ENCODE measurements at regions of chr15 and their contacts with region 1.

Region 1: DNA sequence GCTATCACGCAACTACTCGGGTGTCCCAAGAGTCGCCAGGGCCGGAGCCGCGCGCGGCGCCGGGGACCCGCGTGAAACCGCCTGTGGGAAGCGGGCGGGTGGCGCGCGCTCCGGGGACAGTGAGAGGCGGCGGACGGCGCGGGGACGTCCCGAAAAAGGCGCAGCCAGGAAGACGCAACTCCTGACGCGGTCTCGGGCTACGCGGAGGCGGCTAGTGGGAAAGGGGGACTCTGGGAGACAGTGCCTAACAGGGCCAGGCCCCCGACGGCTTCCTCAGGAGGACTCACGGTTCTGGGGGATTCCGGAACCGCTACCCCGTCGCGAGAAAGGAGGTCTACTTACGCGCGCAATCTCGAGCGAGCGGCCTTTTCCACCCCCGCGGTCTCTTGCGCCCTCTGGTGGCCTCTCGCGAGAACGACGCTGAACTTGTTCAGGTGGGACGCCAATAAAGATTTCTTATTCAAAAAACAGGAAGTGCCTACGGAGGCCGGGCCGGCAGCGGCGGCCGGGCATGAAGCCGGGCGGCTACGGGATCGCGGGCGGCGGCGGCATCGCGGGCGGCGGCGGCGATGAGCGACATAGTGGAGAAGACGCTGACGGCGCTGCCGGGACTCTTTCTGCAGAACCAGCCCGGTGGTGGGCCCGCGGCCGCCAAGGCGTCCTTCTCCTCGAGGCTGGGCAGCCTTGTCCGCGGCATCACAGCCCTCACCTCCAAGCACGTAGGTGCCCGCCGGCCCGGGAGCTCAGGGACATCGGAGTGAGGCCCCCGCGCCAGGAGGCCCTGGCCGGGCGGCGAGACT is at the start of gene AP4E1:
- DNase-seq: peak; percentile 96
- ATAC-seq: peak; percentile 62
- H3K4me3 Mint-ChIP-seq: peak within 1 kb of the TSS; percentile 87
- H3K27ac Mint-ChIP-seq: peak within 1 kb of the TSS; percentile 97
- H3K4me1 Mint-ChIP-seq: peaks cover 24% of the 10 kb centered on the region
- H3K27me3 Mint-ChIP-seq: no peaks in the 10 kb centered on the region
- total RNA-seq, gene AP4E1: 9.0 to 13.1 TPM

Region 2: DNA sequence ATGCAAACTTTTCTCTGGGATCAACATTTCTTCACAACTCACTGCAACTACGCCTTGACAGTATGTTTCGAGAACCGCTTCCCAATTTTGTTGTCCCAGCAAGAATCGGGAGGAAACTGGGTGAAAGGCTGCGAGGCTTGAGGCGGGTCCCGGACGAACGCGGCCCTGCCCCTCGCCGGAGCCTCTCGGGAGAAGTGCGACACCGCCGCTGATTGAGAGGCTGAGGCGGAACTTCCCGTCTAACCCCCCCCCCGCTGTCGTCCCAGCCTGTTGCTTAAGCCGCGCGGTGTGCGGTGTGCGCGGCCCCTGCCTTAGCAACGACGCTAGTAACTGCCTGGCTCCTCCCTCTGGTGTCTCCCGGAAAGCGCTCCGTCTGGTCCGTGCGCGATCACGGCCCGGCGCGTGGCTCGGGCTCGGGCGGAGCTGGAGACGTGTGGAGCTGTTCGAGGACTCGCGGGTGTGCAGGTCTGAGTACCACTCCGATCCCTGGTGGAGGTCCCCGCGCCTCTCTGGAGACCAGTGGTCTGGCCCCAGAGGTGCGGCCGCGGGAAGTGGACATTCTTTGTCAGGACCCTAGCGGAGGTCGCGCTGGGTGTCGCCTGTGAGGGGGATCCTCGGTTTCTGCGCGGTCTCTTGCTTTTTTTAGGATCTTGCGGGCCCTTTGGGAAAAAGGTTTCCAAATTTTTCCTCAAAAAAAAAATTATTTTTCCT is 1287.6 kb before region 1 on chr15 and contains the starts of genes DTWD1 and FAM227B:
- CTCF ChIA-PET with region 1: no interaction called
- POLR2A ChIA-PET with region 1: no interaction called
- intact Hi-C with region 1: loop called in 1 of 2 experiments (anchors 5 kb)
- DNase-seq: peak; percentile 96
- ATAC-seq: peak; percentile 98
- H3K4me3 Mint-ChIP-seq: peak within 1 kb of the TSS; percentile 86
- H3K27ac Mint-ChIP-seq: peak within 1 kb of the TSS; percentile 88
- H3K4me1 Mint-ChIP-seq: peaks cover 36% of the 10 kb centered on the region
- H3K27me3 Mint-ChIP-seq: no peaks in the 10 kb centered on the region
- total RNA-seq, gene DTWD1: 20.4 to 22.4 TPM
- total RNA-seq, gene FAM227B: 2.7 to 4.4 TPM

Region 3: GRCh38 chr15:49989498-49989897 is 918.9 kb before region 1 on chr15:
- CTCF ChIA-PET with region 1: no interaction called
- POLR2A ChIA-PET with region 1: no interaction called
- intact Hi-C with region 1: no loop called
- DNase-seq: no peak
- ATAC-seq: no peak
- H3K4me3 Mint-ChIP-seq: no peak overlapping the region
- H3K27ac Mint-ChIP-seq: no peak overlapping the region
- H3K4me1 Mint-ChIP-seq: no peaks in the 10 kb centered on the region
- H3K27me3 Mint-ChIP-seq: no peaks in the 10 kb centered on the region

Region 4: DNA sequence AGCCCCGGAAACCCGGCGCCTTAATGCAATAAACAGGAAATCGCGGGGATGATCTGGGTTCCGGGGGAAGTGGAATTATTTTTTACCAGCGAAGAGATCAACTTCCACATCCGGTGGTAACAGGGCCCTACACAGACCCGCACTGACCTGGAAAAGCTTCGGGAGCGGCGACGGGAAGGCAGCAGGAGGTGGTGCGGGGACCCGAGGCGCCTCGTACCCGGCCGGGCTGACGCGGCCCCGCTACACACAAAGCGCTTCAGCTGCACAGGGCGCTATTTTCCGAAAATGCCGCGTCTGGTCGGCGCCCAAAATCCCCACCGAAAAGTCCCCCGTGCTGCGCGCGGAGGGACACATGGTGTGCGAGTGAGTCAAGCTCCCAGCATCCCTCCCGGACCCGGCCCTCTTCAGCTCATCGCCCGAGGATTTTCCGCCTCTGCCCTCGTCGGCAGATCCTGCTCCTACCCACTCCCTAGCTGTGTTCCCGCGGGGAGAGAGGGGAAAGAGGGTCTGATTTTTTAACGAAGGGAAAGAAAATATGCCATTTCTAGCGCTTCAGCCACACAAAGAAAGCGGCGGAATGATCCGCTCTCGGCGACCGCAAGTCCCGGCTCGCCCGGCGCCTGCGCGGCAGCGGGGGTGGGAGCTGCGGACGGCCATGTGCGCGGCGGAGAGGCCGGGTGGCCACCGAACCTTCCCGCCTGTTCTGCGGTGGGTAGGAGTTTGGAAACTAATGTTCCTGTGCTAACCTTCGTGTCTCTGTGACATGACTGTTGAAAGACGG is 553.4 kb before region 1 on chr15 and contains the start of gene GABPB1:
- CTCF ChIA-PET with region 1: no interaction called
- POLR2A ChIA-PET with region 1: interaction called, 4 read pairs
- intact Hi-C with region 1: loop called (anchors 1 kb)
- DNase-seq: peak; percentile 94
- ATAC-seq: peak; percentile 42
- H3K4me3 Mint-ChIP-seq: peak within 1 kb of the TSS; percentile 99
- H3K27ac Mint-ChIP-seq: peak within 1 kb of the TSS; percentile 100
- H3K4me1 Mint-ChIP-seq: peaks cover 44% of the 10 kb centered on the region
- H3K27me3 Mint-ChIP-seq: no peaks in the 10 kb centered on the region
- total RNA-seq, gene GABPB1: 46.3 to 53.4 TPM

Region 5: GRCh38 chr15:50562735-50563640 is 345.4 kb before region 1 on chr15:
- CTCF ChIA-PET with region 1: no interaction called
- POLR2A ChIA-PET with region 1: no interaction called
- intact Hi-C with region 1: loop called in 1 of 2 experiments (anchors 5 kb)
- DNase-seq: peak; percentile 34
- ATAC-seq: peak; percentile 75
- H3K4me3 Mint-ChIP-seq: no peak overlapping the region
- H3K27ac Mint-ChIP-seq: peak overlapping the region; percentile 79
- H3K4me1 Mint-ChIP-seq: peaks cover 16% of the 10 kb centered on the region
- H3K27me3 Mint-ChIP-seq: no peaks in the 10 kb centered on the region

Region 6: DNA sequence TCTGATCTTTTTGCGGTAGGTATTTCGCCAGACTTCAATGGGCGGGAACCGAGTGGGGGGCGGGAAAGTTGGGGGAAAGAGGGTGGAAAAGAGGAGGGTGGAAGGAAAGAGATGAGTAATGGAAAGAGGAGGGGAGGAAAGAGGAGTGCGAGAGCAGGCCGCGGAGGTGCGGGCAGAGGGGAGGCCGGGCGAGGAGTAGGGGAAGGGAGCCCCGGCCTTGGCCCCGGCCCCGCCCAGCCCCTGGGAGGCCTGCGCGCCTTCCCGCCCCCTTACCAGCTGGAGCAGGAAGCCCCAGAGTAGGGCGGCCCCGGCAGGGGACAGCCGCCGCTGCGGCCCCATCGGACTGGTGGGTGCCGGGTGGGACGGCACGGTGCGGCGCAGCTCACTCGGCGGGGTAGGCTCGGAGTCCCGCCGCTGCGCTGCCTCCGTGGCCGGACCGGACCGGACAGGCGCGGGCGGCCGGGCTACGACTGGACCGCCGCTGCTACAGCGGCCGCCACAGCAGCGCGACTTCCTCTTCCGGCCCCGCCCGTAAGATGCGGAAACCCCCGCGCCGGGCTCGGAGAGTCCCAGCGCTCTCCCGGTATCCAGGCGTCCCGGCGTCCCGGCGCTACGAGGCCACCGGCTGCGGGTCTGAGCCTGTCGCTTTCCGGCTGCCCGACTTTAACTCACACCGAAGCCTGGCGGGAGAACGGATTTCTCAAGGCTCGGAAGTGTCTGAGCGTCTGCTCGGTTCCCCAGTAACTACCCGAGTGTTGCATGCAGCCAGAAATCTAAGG is 143.0 kb before region 1 on chr15 and contains the start of gene SPPL2A:
- CTCF ChIA-PET with region 1: interaction called, 3 read pairs
- POLR2A ChIA-PET with region 1: interaction called, 10 read pairs
- intact Hi-C with region 1: loop called (anchors 1 kb)
- DNase-seq: peak; percentile 96
- ATAC-seq: peak; percentile 90
- H3K4me3 Mint-ChIP-seq: peak within 1 kb of the TSS; percentile 82
- H3K27ac Mint-ChIP-seq: peak within 1 kb of the TSS; percentile 99
- H3K4me1 Mint-ChIP-seq: peaks cover 50% of the 10 kb centered on the region
- H3K27me3 Mint-ChIP-seq: no peaks in the 10 kb centered on the region
- total RNA-seq, gene SPPL2A: 53.1 to 66.1 TPM

Region 7: DNA sequence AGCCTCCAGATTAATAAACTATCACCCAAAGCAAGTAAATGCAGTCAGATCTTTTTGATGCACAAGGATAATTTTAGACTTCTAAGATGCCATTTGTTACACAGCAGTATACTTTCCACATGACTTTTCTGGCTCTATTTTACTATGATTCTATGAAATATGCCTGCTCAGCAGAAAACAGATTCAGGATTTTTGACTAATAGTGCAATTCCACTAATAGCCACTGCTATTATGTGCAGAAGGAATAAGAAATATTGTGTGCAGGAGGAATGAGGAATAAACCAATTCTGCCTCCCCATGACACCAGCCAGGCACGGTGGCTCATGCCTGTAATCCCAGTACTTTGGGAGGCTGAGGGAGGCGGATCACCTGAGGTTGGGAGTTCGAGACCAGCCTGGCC is 131.4 kb before region 1 on chr15:
- CTCF ChIA-PET with region 1: no interaction called
- POLR2A ChIA-PET with region 1: no interaction called
- intact Hi-C with region 1: no loop called
- DNase-seq: no peak
- ATAC-seq: no peak
- H3K4me3 Mint-ChIP-seq: no peak overlapping the region
- H3K27ac Mint-ChIP-seq: no peak overlapping the region
- H3K4me1 Mint-ChIP-seq: peaks cover 8% of the 10 kb centered on the region
- H3K27me3 Mint-ChIP-seq: no peaks in the 10 kb centered on the region

Region 8: DNA sequence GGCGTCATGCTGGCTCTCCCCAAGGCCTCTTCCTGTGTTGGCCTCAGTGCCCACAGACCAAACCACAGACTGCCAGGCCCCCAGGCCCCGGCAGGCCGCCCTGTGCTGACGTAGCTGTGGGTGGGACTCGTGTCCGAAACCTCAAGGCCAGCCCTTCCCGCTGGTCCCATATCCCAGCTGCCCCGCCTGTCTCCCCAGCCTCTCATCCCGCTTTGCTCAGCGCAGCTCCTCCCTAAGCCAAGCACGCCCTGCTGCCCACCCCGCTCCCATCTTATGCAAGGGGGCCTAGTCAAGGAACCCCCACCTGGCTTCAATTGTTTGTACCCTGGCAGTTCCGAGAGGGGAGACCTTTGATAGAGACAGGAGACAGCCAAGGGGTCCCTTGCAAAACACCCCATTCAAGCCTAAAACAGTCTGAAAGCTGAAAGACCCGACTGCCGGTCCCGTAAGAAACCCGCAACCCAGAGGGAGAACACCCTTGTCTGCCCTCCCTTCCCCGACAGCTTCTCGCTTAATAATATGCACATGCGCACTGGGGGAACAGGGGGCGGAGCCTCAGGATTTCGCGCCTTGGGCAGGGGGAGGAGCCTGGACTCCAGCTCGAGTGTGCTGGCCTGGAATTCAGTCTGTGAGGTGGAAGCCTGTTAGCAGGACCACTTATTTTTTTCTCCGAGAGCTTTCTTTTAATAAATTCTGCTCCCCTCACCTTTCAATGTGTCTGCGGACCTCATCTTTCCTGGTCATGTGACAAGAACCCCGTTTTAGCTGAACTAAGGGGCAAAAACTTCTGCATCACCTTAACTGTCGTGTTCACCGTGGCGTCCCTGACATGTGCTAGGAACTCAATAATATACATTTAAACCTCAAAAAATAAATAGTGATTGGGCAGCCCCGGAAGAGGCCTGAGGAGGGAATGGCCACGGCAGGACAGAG is 169.1 kb after region 1 on chr15:
- CTCF ChIA-PET with region 1: no interaction called
- POLR2A ChIA-PET with region 1: no interaction called
- intact Hi-C with region 1: loop called in 1 of 2 experiments (anchors 1 kb)
- DNase-seq: peak; percentile 88
- ATAC-seq: peak; percentile 94
- H3K4me3 Mint-ChIP-seq: peak overlapping the region; percentile 48
- H3K27ac Mint-ChIP-seq: peak overlapping the region; percentile 65
- H3K4me1 Mint-ChIP-seq: peaks cover 19% of the 10 kb centered on the region
- H3K27me3 Mint-ChIP-seq: peaks cover 8% of the 10 kb centered on the region

Measured in activated CD4-positive, alpha-beta T cell treated with anti-CD3 and anti-CD28 coated beads for 36 hours (primary cell).